H1 (cell line): ENCODE measurements at regions of chr7 and their contacts with region 1.

Region 1: GRCh38 chr7:131338173-131338572 is 10.5 kb downstream of the MKLN1 start:
- DNase-seq: no peak
- H3K4me3 ChIP-seq: no peak overlapping the region
- H3K27ac ChIP-seq: no peak overlapping the region
- H3K4me1 ChIP-seq: peaks cover 0 to 5% (median 2%) of the 10 kb centered on the region in 4 experiments; a peak in 3 of 7 replicates
- H3K27me3 ChIP-seq: no peaks in the 10 kb centered on the region
- CTCF ChIP-seq: peak in 2 of 3 experiments; percentile 39 to 58; a peak in 3 of 4 replicates
- EP300 ChIP-seq: no peak
- POLR2A ChIP-seq: no peak
- RAD21 ChIP-seq: peak; percentile 53 to 55

Region 2: DNA sequence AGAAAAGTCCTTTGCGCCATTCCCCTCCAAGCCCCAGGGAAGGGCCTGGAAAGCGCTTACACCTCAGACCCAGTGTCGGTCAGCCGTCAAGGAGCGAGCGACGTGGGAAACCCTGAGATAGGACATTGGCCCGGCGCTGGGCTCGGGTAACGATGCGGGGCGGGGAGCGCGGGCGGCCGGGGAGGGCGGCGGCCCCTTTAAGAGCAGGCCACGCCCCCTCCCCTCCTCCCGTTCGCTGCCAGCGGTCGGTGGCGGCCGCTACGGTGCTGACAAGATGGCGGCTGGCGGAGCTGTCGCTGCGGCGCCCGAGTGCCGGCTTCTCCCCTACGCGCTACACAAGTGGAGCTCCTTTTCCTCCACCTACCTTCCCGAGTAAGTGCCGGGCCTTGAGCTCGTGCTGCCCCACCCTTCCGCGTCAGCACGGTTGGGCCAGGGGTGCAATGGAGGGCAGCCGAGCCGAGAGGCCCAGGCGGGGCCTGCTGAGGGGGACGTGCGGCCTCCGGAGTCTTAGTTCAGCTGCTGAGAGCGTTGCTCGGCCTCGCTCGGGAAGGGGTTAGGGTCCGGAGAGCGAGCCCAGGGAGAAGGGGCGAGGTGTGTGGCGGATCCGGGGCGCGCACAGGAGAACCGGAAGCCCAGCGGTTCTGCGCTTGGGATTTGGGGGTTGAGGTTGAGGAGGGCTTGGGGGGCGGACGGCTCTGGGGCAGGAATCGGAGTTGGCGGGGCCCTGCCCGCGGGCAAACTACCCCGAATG is 10.4 kb before region 1 on chr7 and contains the start of gene MKLN1:
- CTCF ChIA-PET with region 1: interaction called, 6 read pairs
- POLR2A ChIA-PET with region 1: interaction called, 18 read pairs
- DNase-seq: peak; percentile 77 to 93
- H3K4me3 ChIP-seq: peak within 1 kb of the TSS; percentile 88 to 99 (median 94)
- H3K27ac ChIP-seq: peak within 1 kb of the TSS; percentile 90
- H3K4me1 ChIP-seq: peaks cover under 1 to 19% (median 8%) of the 10 kb centered on the region in 4 experiments; a peak in 5 of 7 replicates
- H3K27me3 ChIP-seq: no peaks in the 10 kb centered on the region
- CTCF ChIP-seq: no peak
- EP300 ChIP-seq: no peak
- POLR2A ChIP-seq: peak; percentile 78 to 93
- RAD21 ChIP-seq: peak in 1 of 2 experiments; percentile 5; a peak in 1 of 4 replicates
- total RNA-seq, gene MKLN1: 45.9 and 50.9 TPM in 2 replicates

Region 3: GRCh38 chr7:131371411-131371810 is 33.2 kb after region 1 on chr7:
- CTCF ChIA-PET with region 1: no interaction called
- POLR2A ChIA-PET with region 1: no interaction called
- DNase-seq: no peak
- H3K4me3 ChIP-seq: no peak overlapping the region; a peak in 1 of 8 replicates
- H3K27ac ChIP-seq: no peak overlapping the region
- H3K4me1 ChIP-seq: peaks cover 0 to 8% (median 7%) of the 10 kb centered on the region in 4 experiments; a peak in 3 of 7 replicates
- H3K27me3 ChIP-seq: no peaks in the 10 kb centered on the region
- CTCF ChIP-seq: no peak
- EP300 ChIP-seq: no peak
- POLR2A ChIP-seq: no peak
- RAD21 ChIP-seq: no peak